ENCODE measurements at regions of chr1 and their contacts with region 1.

Region 1: GRCh38 chr1:119808972-119809550 is 2.2 kb downstream of the REG4 start:
- DNase-seq: peak; percentile 66 to 70
- H3K4me3 ChIP-seq: no peak overlapping the region
- H3K4me3 Mint-ChIP-seq: peak overlapping the region; percentile 44
- H3K27ac Mint-ChIP-seq: no peak overlapping the region
- H3K4me1 ChIP-seq: no peaks in the 10 kb centered on the region
- H3K4me1 Mint-ChIP-seq: peaks cover 8% of the 10 kb centered on the region
- H3K27me3 ChIP-seq: no peaks in the 10 kb centered on the region
- H3K27me3 Mint-ChIP-seq: no peaks in the 10 kb centered on the region
- CTCF ChIP-seq: peak; percentile 82 to 89

Region 2: DNA sequence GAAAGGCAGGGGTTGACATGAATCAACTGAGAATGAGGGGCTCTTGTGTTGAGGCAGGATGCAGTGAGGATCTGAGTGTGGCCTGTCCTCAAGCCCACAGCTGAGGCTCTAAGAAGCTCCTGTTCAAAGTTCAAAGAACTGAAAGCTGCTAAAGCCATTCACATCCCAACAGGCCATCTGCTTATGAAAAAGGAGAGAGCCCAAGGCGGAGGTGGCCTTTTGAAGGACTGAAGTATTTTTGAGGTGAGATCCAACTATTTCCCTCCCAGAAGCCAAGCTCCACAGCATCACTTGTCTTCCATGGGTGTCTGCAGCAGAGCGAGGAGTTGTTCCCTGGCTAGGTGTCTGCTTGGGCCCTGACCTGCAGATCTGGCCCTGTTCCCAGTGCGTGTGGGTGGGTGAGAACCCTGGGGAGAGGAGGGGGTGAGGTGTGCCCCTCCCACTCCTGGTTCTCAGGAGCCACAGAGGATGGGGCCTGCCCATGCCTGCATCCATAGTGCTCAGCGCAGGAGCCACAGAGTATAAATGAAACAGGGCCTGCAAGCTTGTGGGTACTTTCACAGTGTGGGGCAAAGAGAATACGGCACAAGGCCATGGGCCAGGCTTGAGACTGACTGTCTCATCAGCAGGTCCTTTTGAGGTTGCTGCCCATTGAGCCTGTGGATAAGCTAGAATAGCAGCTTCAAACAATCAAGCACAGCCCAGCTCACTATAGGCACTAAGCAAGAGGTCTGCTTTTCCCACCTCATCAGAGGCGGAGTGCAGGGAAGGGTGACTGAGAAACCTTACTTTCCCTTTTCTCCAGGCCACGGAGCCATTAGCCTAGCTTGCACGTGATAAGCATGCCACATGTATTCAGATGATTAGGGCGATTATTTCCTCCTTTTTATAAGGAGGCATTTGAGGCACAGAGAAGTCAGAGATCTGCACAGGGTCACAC is 13.5 kb before region 1 on chr1:
- CTCF ChIA-PET with region 1: no interaction called
- POLR2A ChIA-PET with region 1: no interaction called
- intact Hi-C with region 1: no loop called
- DNase-seq: no peak
- H3K4me3 ChIP-seq: no peak overlapping the region
- H3K4me3 Mint-ChIP-seq: no peak overlapping the region
- H3K27ac Mint-ChIP-seq: no peak overlapping the region
- H3K4me1 ChIP-seq: peaks cover 26% of the 10 kb centered on the region
- H3K4me1 Mint-ChIP-seq: peaks cover 17% of the 10 kb centered on the region
- H3K27me3 ChIP-seq: no peaks in the 10 kb centered on the region
- H3K27me3 Mint-ChIP-seq: no peaks in the 10 kb centered on the region
- CTCF ChIP-seq: no peak

Region 3: GRCh38 chr1:119924948-119925898 is 116.2 kb after region 1 on chr1:
- CTCF ChIA-PET with region 1: no interaction called
- POLR2A ChIA-PET with region 1: no interaction called
- intact Hi-C with region 1: no loop called
- DNase-seq: no peak
- H3K4me3 ChIP-seq: no peak overlapping the region
- H3K4me3 Mint-ChIP-seq: no peak overlapping the region
- H3K27ac Mint-ChIP-seq: no peak overlapping the region
- H3K4me1 ChIP-seq: no peaks in the 10 kb centered on the region
- H3K4me1 Mint-ChIP-seq: no peaks in the 10 kb centered on the region
- H3K27me3 ChIP-seq: no peaks in the 10 kb centered on the region
- H3K27me3 Mint-ChIP-seq: no peaks in the 10 kb centered on the region
- CTCF ChIP-seq: no peak

Region 4: DNA sequence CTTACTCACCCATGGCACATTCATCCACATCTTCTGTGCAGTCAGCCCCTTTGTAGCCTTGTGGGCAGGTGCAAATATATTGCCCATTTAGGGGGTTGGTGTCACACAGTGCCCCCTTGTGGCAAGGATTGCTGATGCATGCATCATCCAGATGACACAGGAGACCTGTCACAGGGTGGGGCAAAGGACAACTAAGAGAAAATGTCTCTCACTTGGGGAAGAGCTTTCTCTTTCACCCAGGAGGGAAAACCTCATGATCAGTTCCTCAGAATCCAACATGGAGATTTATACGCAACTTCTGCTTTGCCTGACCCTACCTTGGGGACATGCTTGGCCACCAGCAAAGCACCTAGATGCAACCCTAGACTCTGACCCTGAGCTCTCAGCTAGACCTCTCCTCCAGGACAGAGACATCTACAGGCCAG is 159.0 kb after region 1 on chr1:
- CTCF ChIA-PET with region 1: no interaction called
- POLR2A ChIA-PET with region 1: no interaction called
- intact Hi-C with region 1: loop called (anchors 10 kb)
- DNase-seq: peak; percentile 71 to 74
- H3K4me3 ChIP-seq: no peak overlapping the region
- H3K4me3 Mint-ChIP-seq: no peak overlapping the region
- H3K27ac Mint-ChIP-seq: peak overlapping the region; percentile 46
- H3K4me1 ChIP-seq: no peaks in the 10 kb centered on the region
- H3K4me1 Mint-ChIP-seq: peaks cover 9% of the 10 kb centered on the region
- H3K27me3 ChIP-seq: no peaks in the 10 kb centered on the region
- H3K27me3 Mint-ChIP-seq: no peaks in the 10 kb centered on the region
- CTCF ChIP-seq: peak; percentile 65 to 66

Measured in Caco-2 (cell line).